ENCODE measurements at regions of chr2 and their contacts with region 1.

Region 1: GRCh38 chr2:52084759-52085158 is 1052.8 kb upstream of the NRXN1 start:
- DNase-seq: peak; percentile 22
- ATAC-seq: no peak
- H3K4me3 ChIP-seq: no peak overlapping the region
- H3K27ac ChIP-seq: 0 out of 2 replicates have a peak overlapping the region, but pooled peaks have one; percentile 75
- H3K4me1 ChIP-seq: peaks cover 12 to 51% of the 10 kb centered on the region in 2 experiments
- H3K27me3 ChIP-seq: no peaks in the 10 kb centered on the region
- CTCF ChIP-seq: no peak
- POLR2A ChIP-seq: no peak
- RAD21 ChIP-seq: no peak

Region 2: GRCh38 chr2:52107124-52107523 is 22.4 kb after region 1 on chr2:
- CTCF ChIA-PET with region 1: no interaction called
- POLR2A ChIA-PET with region 1: no interaction called
- RAD21 ChIA-PET with region 1: no interaction called
- intact Hi-C with region 1: loop called (anchors 1 kb)
- DNase-seq: no peak
- ATAC-seq: no peak
- H3K4me3 ChIP-seq: no peak overlapping the region
- H3K27ac ChIP-seq: no peak overlapping the region
- H3K4me1 ChIP-seq: no peaks in the 10 kb centered on the region
- H3K27me3 ChIP-seq: no peaks in the 10 kb centered on the region
- CTCF ChIP-seq: no peak
- POLR2A ChIP-seq: no peak
- RAD21 ChIP-seq: no peak

Region 3: GRCh38 chr2:52622266-52622665 is 537.5 kb after region 1 on chr2:
- CTCF ChIA-PET with region 1: no interaction called
- POLR2A ChIA-PET with region 1: no interaction called
- RAD21 ChIA-PET with region 1: no interaction called
- intact Hi-C with region 1: no loop called
- DNase-seq: no peak
- ATAC-seq: no peak
- H3K4me3 ChIP-seq: no peak overlapping the region
- H3K27ac ChIP-seq: no peak overlapping the region
- H3K4me1 ChIP-seq: no peaks in the 10 kb centered on the region
- H3K27me3 ChIP-seq: no peaks in the 10 kb centered on the region
- CTCF ChIP-seq: no peak
- POLR2A ChIP-seq: no peak
- RAD21 ChIP-seq: no peak